Heart left ventricle (tissue), 16 donors: ENCODE measurements at regions of chr17 and their contacts with region 1.

Region 1: GRCh38 chr17:78840725-78841611 is at the start of gene USP36:
- DNase-seq: peak; percentile 99 to 100 (median 100)
- ATAC-seq: peak; percentile 96 to 97 (median 97)
- H3K4me3 ChIP-seq: peak within 1 kb of the TSS; percentile 71 to 99 (median 90)
- H3K27ac ChIP-seq: peak within 1 kb of the TSS; percentile 92 to 100 (median 98)
- H3K4me1 ChIP-seq: peaks cover 0 to 30% (median 19%) of the 10 kb centered on the region in 12 donors
- H3K27me3 ChIP-seq: no peaks in the 10 kb centered on the region
- CTCF ChIP-seq: peak in 2 of 12 donors; percentile 3 to 11
- POLR2A ChIP-seq: peak; percentile 47 to 93
- total RNA-seq, gene USP36: 14.0 to 40.9 (median 21.0) TPM

Region 2: DNA sequence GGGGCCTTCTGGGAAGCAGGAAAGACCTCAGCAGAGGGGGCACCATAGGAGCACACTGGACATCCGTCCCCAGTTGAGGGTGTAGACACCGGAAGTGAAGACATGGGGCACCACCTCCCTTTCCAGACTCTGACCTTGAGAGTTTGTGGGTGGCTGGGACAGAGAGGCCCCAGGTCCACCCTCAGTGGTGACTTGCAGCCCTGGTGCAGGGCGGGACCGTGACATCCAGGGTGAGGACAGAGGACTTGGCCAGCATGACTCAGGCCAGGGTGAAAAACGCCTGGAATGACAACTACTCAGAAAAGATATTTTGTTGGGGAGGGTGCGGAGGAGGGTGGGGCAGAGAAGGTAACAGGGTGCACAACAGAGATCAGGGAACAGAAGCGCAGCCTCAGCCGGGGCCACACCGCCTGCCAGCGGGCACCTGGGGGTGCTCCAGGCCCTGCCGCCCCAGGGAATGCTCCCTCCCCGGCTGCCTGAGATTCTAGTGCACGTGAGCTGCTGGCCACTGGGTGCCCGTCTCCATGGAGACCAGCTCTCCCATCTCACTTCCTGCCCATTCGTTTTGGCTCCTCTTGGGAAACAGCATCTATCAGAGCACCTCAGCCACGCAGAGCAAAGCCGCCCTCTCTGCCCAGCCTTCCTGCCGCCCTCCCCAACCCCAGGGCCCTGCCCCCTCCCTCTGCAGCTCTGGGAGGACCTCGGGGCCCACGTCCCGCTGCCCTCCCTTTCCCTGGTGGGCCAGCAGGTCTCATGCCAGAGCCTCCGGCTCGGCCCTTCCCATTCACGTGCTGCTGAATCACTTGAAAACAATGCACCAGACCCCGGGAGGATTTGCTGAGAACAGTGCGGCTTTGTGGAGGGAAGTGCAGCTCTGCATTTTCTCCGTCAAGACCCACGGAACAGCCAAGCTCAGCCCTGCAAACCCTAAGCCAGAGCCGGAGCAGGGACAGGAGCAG is 42.5 kb after region 1 on chr17:
- intact Hi-C with region 1: loop called in 1 of 10 experiments (anchors 2 kb)
- DNase-seq: peak; percentile 81 to 90 (median 88)
- ATAC-seq: peak; percentile 53 to 77 (median 76)
- H3K4me3 ChIP-seq: peak overlapping the region in 10 of 12 donors; percentile 6 to 50 (median 29)
- H3K27ac ChIP-seq: peak overlapping the region; percentile 86 to 98 (median 96)
- H3K4me1 ChIP-seq: peaks cover 9 to 78% (median 71%) of the 10 kb centered on the region in 12 donors
- H3K27me3 ChIP-seq: no peaks in the 10 kb centered on the region
- CTCF ChIP-seq: peak in 1 of 12 donors; percentile 7
- POLR2A ChIP-seq: peak in 1 of 2 donors; percentile 41